Heart right ventricle (tissue), 16 donors: ENCODE measurements at regions of chr4 and their contacts with region 1.

Region 1: GRCh38 chr4:40840985-40841571 is 91.3 kb downstream of the NSUN7 start:
- DNase-seq: peak; percentile 65 to 71
- ATAC-seq: peak; percentile 29 to 69 (median 62)
- H3K4me3 ChIP-seq: no peak overlapping the region
- H3K27ac ChIP-seq: peak overlapping the region in 5 of 10 donors; percentile 4 to 79 (median 61)
- H3K4me1 ChIP-seq: peaks cover 0 to 51% (median 10%) of the 10 kb centered on the region in 9 donors
- H3K27me3 ChIP-seq: no peaks in the 10 kb centered on the region
- CTCF ChIP-seq: peak; percentile 19 to 79 (median 65)

Region 2: DNA sequence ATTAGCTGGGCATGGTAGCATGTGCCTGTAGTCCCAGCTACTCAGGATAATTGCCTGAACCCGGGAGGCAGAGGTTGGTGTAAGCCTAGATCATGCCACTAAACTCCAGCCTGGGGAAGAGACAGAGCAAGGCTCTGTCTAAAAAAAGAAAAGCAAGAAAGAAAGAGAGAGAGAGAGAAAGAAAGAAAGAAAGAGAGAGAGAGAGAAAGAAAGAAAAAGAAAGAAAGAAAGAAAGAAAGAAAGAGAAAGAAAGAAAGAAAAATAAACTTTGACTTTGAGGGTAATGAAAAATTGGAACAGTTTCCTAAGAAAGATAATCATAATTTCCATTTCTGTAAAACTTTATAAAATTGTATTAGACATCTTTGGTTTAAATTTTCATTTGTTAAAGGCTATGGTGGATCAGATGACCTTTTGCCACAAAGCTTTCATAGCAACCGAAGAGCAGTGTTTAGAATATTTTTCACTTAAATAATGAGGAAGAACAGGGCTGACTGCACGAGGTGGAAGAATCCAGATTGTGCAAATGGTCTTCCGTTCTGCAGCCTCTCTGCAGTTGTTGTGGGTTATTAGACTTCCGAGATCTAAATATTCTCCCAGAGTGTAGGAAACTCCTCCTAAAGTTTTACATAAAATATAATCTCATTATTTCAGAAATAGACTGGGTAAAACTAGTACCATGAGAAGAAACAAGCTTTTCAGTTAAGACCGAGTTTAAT is 267.3 kb before region 1 on chr4:
- intact Hi-C with region 1: no loop called
- DNase-seq: no peak
- ATAC-seq: peak in 5 of 8 donors; percentile 25 to 51 (median 34)
- H3K4me3 ChIP-seq: no peak overlapping the region
- H3K27ac ChIP-seq: peak overlapping the region in 5 of 10 donors; percentile 13 to 82 (median 48)
- H3K4me1 ChIP-seq: peaks cover 0 to 66% (median 10%) of the 10 kb centered on the region in 9 donors
- H3K27me3 ChIP-seq: no peaks in the 10 kb centered on the region
- CTCF ChIP-seq: no peak

Region 3: GRCh38 chr4:40656201-40656901 is 184.7 kb before region 1 on chr4:
- intact Hi-C with region 1: no loop called
- DNase-seq: no peak
- ATAC-seq: no peak
- H3K4me3 ChIP-seq: no peak overlapping the region
- H3K27ac ChIP-seq: no peak overlapping the region
- H3K4me1 ChIP-seq: peaks cover 0 to 15% (median 0%) of the 10 kb centered on the region in 9 donors
- H3K27me3 ChIP-seq: no peaks in the 10 kb centered on the region
- CTCF ChIP-seq: no peak

Region 4: DNA sequence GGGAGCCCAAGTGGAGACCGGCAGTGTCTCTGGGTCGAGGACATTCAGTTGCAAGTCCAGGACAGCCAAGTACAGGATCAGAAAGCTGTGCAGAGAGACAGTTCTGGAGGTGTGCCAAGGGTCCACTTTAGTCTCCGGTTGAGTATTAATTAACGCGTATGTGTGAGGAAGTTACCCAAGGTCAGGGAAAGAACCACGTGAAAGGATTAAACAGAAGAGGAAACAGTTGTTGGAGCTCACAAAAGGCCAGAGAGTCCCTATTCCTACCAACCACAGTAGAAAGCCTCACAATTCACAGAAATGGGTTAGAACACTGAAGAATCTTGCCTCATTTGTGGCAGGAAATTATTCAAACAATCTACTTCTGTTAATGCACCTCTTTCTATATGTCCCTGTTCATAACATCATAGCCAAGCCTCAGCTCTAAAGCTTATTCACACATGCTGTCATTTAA is 109.3 kb before region 1 on chr4:
- intact Hi-C with region 1: loop called in 1 of 10 experiments (anchors 5 kb)
- DNase-seq: peak; percentile 17 to 60
- ATAC-seq: peak in 7 of 8 donors; percentile 51 to 87 (median 75)
- H3K4me3 ChIP-seq: no peak overlapping the region
- H3K27ac ChIP-seq: peak overlapping the region in 6 of 10 donors; percentile 5 to 75 (median 39)
- H3K4me1 ChIP-seq: peaks cover 0 to 36% (median 7%) of the 10 kb centered on the region in 9 donors
- H3K27me3 ChIP-seq: no peaks in the 10 kb centered on the region
- CTCF ChIP-seq: no peak

Region 5: GRCh38 chr4:41111791-41112190 is 270.7 kb after region 1 on chr4:
- intact Hi-C with region 1: no loop called
- DNase-seq: no peak
- ATAC-seq: no peak
- H3K4me3 ChIP-seq: no peak overlapping the region
- H3K27ac ChIP-seq: no peak overlapping the region
- H3K4me1 ChIP-seq: peaks cover 0 to 22% (median 0%) of the 10 kb centered on the region in 9 donors
- H3K27me3 ChIP-seq: no peaks in the 10 kb centered on the region
- CTCF ChIP-seq: no peak

Region 6: DNA sequence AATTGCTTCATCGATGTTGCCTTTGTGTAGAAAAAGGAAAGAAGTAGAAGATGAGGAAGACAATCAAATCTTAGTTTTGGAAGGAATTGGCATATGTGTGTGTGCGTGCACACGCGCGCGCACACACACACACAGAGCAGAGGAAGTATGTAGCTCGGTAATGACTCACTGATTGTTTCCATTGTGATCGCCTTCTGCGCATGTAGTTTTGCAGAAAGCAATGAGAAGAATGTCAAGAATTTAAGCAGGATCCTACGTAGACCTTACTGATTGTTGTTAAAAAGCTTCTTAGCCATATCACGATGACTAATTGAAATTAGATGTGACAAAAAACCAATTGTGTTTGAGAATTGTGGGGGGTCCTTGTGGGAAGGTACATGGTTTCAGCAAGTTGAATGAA is 684.1 kb after region 1 on chr4:
- intact Hi-C with region 1: no loop called
- DNase-seq: peak in 1 of 2 donors; percentile 36
- ATAC-seq: peak; percentile 61 to 89 (median 78)
- H3K4me3 ChIP-seq: no peak overlapping the region
- H3K27ac ChIP-seq: peak overlapping the region in 7 of 10 donors; percentile 6 to 72 (median 46)
- H3K4me1 ChIP-seq: peaks cover 0 to 67% (median 27%) of the 10 kb centered on the region in 9 donors
- H3K27me3 ChIP-seq: no peaks in the 10 kb centered on the region
- CTCF ChIP-seq: no peak

Region 7: GRCh38 chr4:41814565-41814964 is 973.5 kb after region 1 on chr4:
- intact Hi-C with region 1: loop called in 1 of 10 experiments (anchors 5 kb)
- DNase-seq: peak; percentile 5 to 11
- ATAC-seq: peak in 2 of 8 donors; percentile 50 to 69
- H3K4me3 ChIP-seq: no peak overlapping the region
- H3K27ac ChIP-seq: no peak overlapping the region
- H3K4me1 ChIP-seq: peaks cover 0 to 8% (median 0%) of the 10 kb centered on the region in 9 donors
- H3K27me3 ChIP-seq: peaks cover 0 to 53% (median 20%) of the 10 kb centered on the region in 7 donors
- CTCF ChIP-seq: peak in 7 of 9 donors; percentile 34 to 63 (median 56)